Caco-2 (cell line): ENCODE measurements at regions of chr17 and their contacts with region 1.

Region 1: GRCh38 chr17:37818689-37819088 is 73.8 kb upstream of the HNF1B start:
- DNase-seq: no peak
- H3K4me3 ChIP-seq: no peak overlapping the region
- H3K4me3 Mint-ChIP-seq: no peak overlapping the region
- H3K27ac Mint-ChIP-seq: no peak overlapping the region
- H3K4me1 ChIP-seq: peaks cover 7% of the 10 kb centered on the region; the same call in 1 of the 2 replicates
- H3K4me1 Mint-ChIP-seq: no peaks in the 10 kb centered on the region
- H3K27me3 ChIP-seq: no peaks in the 10 kb centered on the region
- H3K27me3 Mint-ChIP-seq: no peaks in the 10 kb centered on the region
- CTCF ChIP-seq: no peak

Region 2: DNA sequence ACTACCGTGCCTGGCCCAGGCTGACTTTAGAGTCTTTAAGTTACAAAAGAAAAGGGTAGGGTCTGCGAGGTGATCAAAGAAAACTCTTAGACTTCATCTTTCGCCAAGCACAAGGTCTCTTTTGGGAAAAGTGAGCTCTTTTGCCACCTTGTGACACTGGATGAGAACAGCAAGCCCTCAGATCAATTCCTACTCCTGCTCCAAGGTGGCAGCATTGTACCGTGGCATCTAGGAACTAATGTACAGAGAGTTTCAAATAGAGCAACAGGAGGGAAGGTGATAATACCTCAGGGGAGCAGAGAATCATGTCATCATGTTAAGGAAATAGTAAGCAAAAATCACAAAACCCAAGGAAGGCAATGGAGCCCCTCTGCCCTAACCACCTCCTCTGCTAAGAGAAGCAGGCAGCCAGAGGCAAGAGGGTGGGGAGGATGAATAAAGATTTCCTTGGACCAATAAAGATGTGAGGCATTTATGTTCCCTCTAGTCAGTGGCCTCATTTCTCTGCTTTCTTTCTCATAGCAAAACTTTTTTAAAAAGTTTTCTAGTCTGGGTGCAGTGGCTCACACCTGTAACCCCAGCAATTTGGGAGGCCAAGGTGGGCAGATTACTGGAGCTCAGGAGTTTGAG is 445.0 kb before region 1 on chr17:
- CTCF ChIA-PET with region 1: interaction called, 10 read pairs
- POLR2A ChIA-PET with region 1: no interaction called
- intact Hi-C with region 1: no loop called
- DNase-seq: peak; percentile 83 to 85
- H3K4me3 ChIP-seq: no peak overlapping the region
- H3K4me3 Mint-ChIP-seq: no peak overlapping the region
- H3K27ac Mint-ChIP-seq: no peak overlapping the region
- H3K4me1 ChIP-seq: peaks cover 2% of the 10 kb centered on the region; the same call in 1 of the 2 replicates
- H3K4me1 Mint-ChIP-seq: no peaks in the 10 kb centered on the region
- H3K27me3 ChIP-seq: no peaks in the 10 kb centered on the region
- H3K27me3 Mint-ChIP-seq: no peaks in the 10 kb centered on the region
- CTCF ChIP-seq: peak; percentile 99 to 100

Region 3: DNA sequence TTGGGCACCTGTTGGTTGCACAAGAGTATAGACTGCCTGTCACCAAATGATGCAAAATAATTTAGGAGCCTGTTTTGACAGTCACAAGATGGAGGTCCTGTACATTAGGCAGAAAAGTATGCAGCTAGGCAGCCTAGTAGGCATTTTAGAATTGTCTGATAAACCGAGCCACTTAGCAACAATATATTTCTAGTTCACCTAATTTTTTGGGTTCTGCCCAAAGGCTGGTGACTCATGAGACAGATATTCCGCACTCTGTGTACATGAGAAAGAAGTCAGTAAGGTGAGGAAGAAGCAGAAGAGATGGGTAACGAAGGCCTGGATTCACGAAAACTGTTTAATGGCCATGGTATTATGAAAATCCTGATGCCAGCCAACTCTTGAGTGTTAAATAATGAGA is 419.3 kb before region 1 on chr17:
- CTCF ChIA-PET with region 1: no interaction called
- POLR2A ChIA-PET with region 1: no interaction called
- intact Hi-C with region 1: no loop called
- DNase-seq: no peak
- H3K4me3 ChIP-seq: no peak overlapping the region
- H3K4me3 Mint-ChIP-seq: no peak overlapping the region
- H3K27ac Mint-ChIP-seq: no peak overlapping the region
- H3K4me1 ChIP-seq: peaks cover 12% of the 10 kb centered on the region; the same call in 1 of the 2 replicates
- H3K4me1 Mint-ChIP-seq: peaks cover 19% of the 10 kb centered on the region
- H3K27me3 ChIP-seq: no peaks in the 10 kb centered on the region
- H3K27me3 Mint-ChIP-seq: no peaks in the 10 kb centered on the region
- CTCF ChIP-seq: no peak

Region 4: GRCh38 chr17:37609170-37610040 is 209.3 kb before region 1 on chr17 and contains the start of gene SYNRG:
- CTCF ChIA-PET with region 1: interaction called, 10 read pairs
- POLR2A ChIA-PET with region 1: interaction called, 4 read pairs
- intact Hi-C with region 1: loop called (anchors 1 kb)
- DNase-seq: peak; percentile 97 to 99
- H3K4me3 ChIP-seq: peak within 1 kb of the TSS; percentile 65
- H3K4me3 Mint-ChIP-seq: peak within 1 kb of the TSS; percentile 86
- H3K27ac Mint-ChIP-seq: peak within 1 kb of the TSS; percentile 90
- H3K4me1 ChIP-seq: 0 out of 2 replicates have a peak, but pooled peaks cover 3% of the 10 kb centered on the region
- H3K4me1 Mint-ChIP-seq: no peaks in the 10 kb centered on the region
- H3K27me3 ChIP-seq: no peaks in the 10 kb centered on the region
- H3K27me3 Mint-ChIP-seq: no peaks in the 10 kb centered on the region
- CTCF ChIP-seq: peak; percentile 63 to 64
- total RNA-seq, gene SYNRG: 36.6 and 40.5 TPM in 2 replicates

Region 5: GRCh38 chr17:37661400-37662014 is 157.2 kb before region 1 on chr17:
- CTCF ChIA-PET with region 1: no interaction called
- POLR2A ChIA-PET with region 1: no interaction called
- intact Hi-C with region 1: no loop called
- DNase-seq: no peak
- H3K4me3 ChIP-seq: no peak overlapping the region
- H3K4me3 Mint-ChIP-seq: no peak overlapping the region
- H3K27ac Mint-ChIP-seq: no peak overlapping the region
- H3K4me1 ChIP-seq: peaks cover 5% of the 10 kb centered on the region; the same call in 1 of the 2 replicates
- H3K4me1 Mint-ChIP-seq: peaks cover 20% of the 10 kb centered on the region
- H3K27me3 ChIP-seq: no peaks in the 10 kb centered on the region
- H3K27me3 Mint-ChIP-seq: no peaks in the 10 kb centered on the region
- CTCF ChIP-seq: peak in 1 of 2 experiments; percentile 26

Region 6: GRCh38 chr17:37701496-37701898 is 117.2 kb before region 1 on chr17:
- CTCF ChIA-PET with region 1: interaction called, 4 read pairs
- POLR2A ChIA-PET with region 1: no interaction called
- intact Hi-C with region 1: loop called (anchors 5 kb)
- DNase-seq: peak in 1 of 2 experiments; percentile 58
- H3K4me3 ChIP-seq: no peak overlapping the region
- H3K4me3 Mint-ChIP-seq: no peak overlapping the region
- H3K27ac Mint-ChIP-seq: peak overlapping the region; percentile 84
- H3K4me1 ChIP-seq: peaks cover 12% of the 10 kb centered on the region
- H3K4me1 Mint-ChIP-seq: peaks cover 43% of the 10 kb centered on the region
- H3K27me3 ChIP-seq: no peaks in the 10 kb centered on the region
- H3K27me3 Mint-ChIP-seq: no peaks in the 10 kb centered on the region
- CTCF ChIP-seq: peak; percentile 64 to 79

Region 7: DNA sequence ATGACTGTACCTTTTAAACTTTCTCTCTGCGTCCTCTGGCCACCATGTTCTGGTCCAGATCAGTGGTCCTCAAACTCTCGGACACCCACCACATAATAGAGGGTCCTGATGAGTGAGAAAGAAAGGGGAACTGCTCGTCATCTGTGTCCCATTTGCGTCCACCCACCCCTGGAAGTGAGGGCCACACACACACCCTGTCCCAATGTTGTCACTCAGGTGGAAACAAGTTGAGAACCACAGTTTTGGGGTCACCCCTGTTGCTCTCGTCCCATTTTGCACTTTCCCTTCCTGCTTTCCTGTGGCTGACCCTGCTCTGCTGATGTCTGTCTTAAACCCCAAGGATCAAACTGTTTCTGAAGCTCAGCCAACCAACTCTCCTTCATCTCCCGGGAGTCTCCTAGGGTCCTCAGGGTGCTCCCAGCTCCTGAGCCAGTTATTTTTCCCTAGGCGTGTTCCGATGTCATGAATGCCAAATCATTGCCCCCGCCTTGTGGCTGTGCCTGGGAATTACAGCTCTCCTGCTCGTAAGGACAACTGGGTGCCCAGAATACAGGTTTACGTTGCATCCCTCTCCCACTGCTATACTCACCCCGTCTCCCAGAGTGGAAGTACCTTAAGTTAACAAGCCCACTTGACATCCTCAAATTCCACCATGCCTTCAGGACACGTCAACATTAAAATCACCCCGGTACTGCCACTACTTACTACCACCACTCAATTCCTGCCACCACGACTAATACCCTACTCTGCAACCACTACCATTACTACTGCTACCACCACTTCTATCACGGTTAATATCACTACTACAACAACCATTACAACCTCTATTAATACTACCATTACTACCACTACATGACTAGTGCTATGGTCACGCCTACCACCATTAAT is 47.8 kb before region 1 on chr17:
- CTCF ChIA-PET with region 1: interaction called, 6 read pairs
- POLR2A ChIA-PET with region 1: no interaction called
- intact Hi-C with region 1: loop called (anchors 2 kb)
- DNase-seq: peak; percentile 79 to 83
- H3K4me3 ChIP-seq: no peak overlapping the region
- H3K4me3 Mint-ChIP-seq: no peak overlapping the region
- H3K27ac Mint-ChIP-seq: peak overlapping the region; percentile 4
- H3K4me1 ChIP-seq: no peaks in the 10 kb centered on the region
- H3K4me1 Mint-ChIP-seq: peaks cover 11% of the 10 kb centered on the region
- H3K27me3 ChIP-seq: no peaks in the 10 kb centered on the region
- H3K27me3 Mint-ChIP-seq: no peaks in the 10 kb centered on the region
- CTCF ChIP-seq: peak; percentile 81 to 89

Region 8: GRCh38 chr17:37830151-37830993 is 11.7 kb after region 1 on chr17:
- CTCF ChIA-PET with region 1: interaction called, 7 read pairs
- POLR2A ChIA-PET with region 1: no interaction called
- intact Hi-C with region 1: loop called (anchors 1 kb)
- DNase-seq: peak; percentile 81 to 83
- H3K4me3 ChIP-seq: no peak overlapping the region
- H3K4me3 Mint-ChIP-seq: peak overlapping the region; percentile 12
- H3K27ac Mint-ChIP-seq: peak overlapping the region; percentile 80
- H3K4me1 ChIP-seq: peaks cover 53% of the 10 kb centered on the region
- H3K4me1 Mint-ChIP-seq: peaks cover 62% of the 10 kb centered on the region
- H3K27me3 ChIP-seq: no peaks in the 10 kb centered on the region
- H3K27me3 Mint-ChIP-seq: no peaks in the 10 kb centered on the region
- CTCF ChIP-seq: no peak